PC-9 (cell line): ENCODE measurements at regions of chr1 and their contacts with region 1.

Region 1: DNA sequence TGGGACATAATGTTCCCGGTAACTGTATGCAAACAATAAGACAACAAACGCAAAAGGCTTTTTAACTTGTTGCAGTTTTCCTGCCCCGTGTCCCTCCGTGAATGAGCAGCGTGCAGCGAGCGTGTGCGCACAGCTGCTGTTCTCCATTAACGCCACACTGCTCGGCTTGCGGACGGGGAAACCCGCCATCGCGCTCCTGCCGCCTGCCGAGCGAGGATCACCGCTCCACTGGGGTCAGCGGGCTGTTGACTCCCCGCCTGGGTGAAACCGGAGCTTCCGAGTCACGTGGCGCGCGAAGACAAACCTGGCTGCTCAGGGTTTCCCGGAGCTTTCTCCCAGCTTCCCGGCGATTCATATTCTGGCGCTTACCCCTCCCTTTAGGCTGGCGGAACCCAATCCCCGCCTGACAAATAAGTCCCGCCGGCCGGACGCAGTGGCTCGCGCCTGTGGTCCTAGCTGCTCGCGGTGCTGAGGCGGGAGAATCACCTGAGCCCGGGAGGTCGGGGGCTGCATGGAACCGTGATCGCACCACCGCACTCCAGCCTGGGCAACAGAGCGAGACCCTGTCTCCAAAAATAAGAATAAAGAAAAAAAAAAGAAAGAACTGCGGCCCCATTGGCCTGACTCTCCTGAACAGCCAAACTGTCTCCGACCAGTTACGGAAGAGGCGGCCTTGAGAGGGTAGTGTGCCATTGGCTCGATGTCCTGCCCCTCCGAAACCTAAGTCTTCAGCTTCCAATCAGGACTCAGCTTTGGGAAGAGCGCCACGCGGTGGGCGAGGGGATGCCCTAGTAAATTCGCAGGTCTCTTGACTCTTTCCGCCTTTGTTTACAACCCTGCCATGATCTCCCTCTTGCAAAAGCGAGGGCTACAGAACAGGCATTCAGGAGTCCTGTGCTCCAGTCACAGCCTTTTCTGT is at the start of gene CREB3L4:
- DNase-seq: peak; percentile 92 to 93
- H3K4me3 ChIP-seq: peak within 1 kb of the TSS; percentile 90
- H3K27ac ChIP-seq: peak within 1 kb of the TSS; percentile 80
- H3K4me1 ChIP-seq: peaks cover 37% of the 10 kb centered on the region
- H3K27me3 ChIP-seq: no peaks in the 10 kb centered on the region
- CTCF ChIP-seq: peak; percentile 58; the same call in 1 of the 2 replicates
- total RNA-seq, gene CREB3L4: 23.4 and 25.9 TPM in 2 replicates

Region 2: DNA sequence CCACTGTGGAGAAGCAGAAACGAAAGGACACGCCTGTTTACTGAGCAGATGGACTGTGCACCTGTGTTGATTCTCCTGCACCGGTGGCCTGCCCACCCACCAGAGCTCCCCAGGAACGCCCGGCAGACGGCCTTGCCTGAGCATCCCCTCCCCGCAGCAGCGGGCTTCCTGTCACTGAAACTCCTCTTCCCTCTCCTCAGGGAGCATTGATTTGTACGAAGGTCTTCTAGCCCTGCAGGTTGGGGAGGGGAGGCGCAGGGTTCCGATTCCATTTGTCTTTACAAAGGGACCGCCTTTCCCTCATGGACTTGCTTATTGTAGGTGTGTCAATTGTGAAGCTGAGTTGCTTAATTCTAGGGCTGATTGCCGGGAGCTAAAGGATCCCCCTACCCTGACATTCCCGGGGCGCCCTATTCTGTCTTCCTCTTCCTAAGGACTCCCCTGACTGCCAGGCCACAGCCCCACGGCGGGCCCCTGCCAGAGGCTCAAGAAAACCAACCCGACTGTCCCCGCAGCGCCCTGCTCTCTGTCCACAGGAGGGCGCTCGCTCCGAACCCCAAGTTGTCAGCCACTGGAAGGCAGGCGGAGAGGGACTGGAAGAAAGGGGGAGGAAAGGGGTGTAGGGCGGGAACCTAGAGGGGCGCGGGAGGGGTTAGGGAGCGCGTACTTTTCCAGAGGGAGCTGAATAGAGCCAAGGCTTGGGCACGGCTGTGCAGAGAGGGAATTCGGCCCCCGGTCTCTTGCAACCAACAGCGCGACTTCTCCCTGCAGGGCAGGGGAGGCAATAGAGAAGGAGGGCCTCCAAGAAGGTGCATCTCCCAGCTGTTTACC is 434.4 kb before region 1 on chr1:
- CTCF ChIA-PET with region 1: interaction called, 3 read pairs
- POLR2A ChIA-PET with region 1: no interaction called
- intact Hi-C with region 1: loop called (anchors 10 kb)
- DNase-seq: peak; percentile 53 to 85
- H3K4me3 ChIP-seq: peak overlapping the region; percentile 85; the same call in 1 of the 2 replicates
- H3K27ac ChIP-seq: peak overlapping the region; percentile 81
- H3K4me1 ChIP-seq: peaks cover 44% of the 10 kb centered on the region
- H3K27me3 ChIP-seq: no peaks in the 10 kb centered on the region
- CTCF ChIP-seq: peak; percentile 90

Region 3: GRCh38 chr1:153880962-153881361 is 86.4 kb before region 1 on chr1:
- CTCF ChIA-PET with region 1: no interaction called
- POLR2A ChIA-PET with region 1: interaction called, 10 read pairs
- intact Hi-C with region 1: no loop called
- DNase-seq: peak in 1 of 2 experiments; percentile 23
- H3K4me3 ChIP-seq: no peak overlapping the region
- H3K27ac ChIP-seq: no peak overlapping the region
- H3K4me1 ChIP-seq: no peaks in the 10 kb centered on the region
- H3K27me3 ChIP-seq: no peaks in the 10 kb centered on the region
- CTCF ChIP-seq: no peak

Region 4: DNA sequence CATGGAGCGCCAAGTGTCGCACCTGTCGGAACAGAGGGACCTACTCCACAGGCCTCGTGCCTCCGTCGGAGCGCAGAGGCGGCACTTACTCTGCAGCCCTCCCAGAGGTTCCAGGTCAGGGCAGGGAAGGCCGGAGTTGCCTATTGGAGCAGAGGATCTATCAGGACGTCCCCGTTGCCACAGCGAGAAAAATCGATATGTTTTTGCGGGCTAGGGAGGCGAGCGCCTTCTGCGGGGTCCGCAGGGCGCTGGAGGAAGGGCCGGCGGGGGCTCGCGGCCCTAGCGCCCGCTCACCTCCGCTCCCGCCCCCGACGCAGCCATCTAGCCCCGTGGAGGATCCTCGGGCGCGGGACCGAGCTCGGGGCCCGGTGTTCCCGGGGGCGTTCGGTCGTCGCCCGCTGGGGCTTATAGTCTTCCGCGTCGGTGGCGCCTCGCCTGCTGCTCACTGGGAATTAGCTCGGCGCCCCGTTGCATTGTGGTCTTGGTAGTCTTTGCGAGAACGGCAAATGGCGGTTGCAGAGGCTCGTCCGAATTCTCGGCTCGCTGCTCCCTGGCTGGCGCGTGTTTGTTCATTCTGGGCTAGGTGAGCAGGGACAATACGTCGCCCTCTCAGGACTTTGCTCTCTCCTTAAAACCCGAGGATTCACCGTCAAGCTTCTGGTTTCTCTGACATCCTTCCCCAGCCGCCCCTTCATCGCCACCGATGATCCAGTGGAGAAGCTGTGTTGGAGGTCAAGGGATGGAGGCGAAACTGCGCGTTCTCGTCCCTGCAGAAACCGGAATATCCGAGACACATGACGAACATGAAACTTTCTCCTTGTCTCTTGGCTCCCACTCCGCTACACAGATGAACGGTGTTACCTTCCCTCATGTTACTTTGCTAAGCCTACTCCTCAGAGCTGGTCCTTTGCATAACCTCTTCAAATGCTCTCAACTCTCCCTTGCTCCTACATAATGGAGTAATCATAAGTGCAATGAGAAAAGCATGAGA is 10.2 kb after region 1 on chr1 and contains the start of gene JTB:
- CTCF ChIA-PET with region 1: interaction called, 6 read pairs
- POLR2A ChIA-PET with region 1: interaction called, 13 read pairs
- intact Hi-C with region 1: no loop called
- DNase-seq: peak; percentile 68 to 73
- H3K4me3 ChIP-seq: peak within 1 kb of the TSS; percentile 91
- H3K27ac ChIP-seq: peak within 1 kb of the TSS; percentile 58
- H3K4me1 ChIP-seq: peaks cover 15% of the 10 kb centered on the region; the same call in 1 of the 2 replicates
- H3K27me3 ChIP-seq: no peaks in the 10 kb centered on the region
- CTCF ChIP-seq: no peak
- total RNA-seq, gene JTB: 106 and 108 TPM in 2 replicates

Region 5: DNA sequence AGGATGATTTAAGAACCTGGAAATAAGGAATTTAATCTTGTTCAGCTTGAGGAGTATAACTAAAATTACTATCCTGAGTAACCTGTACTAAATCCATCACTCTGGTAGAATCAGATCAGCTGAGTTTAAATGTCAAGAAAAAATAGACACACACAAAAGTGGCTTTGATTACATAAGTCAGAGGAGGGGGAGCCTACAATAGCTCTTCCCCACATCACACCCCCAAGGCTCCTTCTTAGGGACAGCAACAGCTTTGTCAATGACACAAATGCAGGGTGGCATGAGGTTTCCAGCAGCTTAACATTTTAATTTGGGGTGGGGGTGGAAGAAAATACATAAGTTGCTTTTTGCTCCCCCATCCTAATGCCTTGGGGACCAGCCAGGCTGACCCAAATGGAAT is 200.1 kb after region 1 on chr1:
- CTCF ChIA-PET with region 1: no interaction called
- POLR2A ChIA-PET with region 1: interaction called, 15 read pairs
- intact Hi-C with region 1: no loop called
- DNase-seq: no peak
- H3K4me3 ChIP-seq: no peak overlapping the region
- H3K27ac ChIP-seq: no peak overlapping the region
- H3K4me1 ChIP-seq: no peaks in the 10 kb centered on the region
- H3K27me3 ChIP-seq: no peaks in the 10 kb centered on the region
- CTCF ChIP-seq: no peak